Endothelial cell of umbilical vein (primary cell): ENCODE measurements at regions of chr14 and their contacts with region 1.

Region 1: GRCh38 chr14:32252030-32252670 is 49.1 kb upstream of the RNU6-8 start:
- DNase-seq: peak; percentile 69
- H3K4me3 ChIP-seq: no peak overlapping the region
- H3K27ac ChIP-seq: no peak overlapping the region
- H3K4me1 ChIP-seq: no peaks in the 10 kb centered on the region
- H3K27me3 ChIP-seq: no peaks in the 10 kb centered on the region
- CTCF ChIP-seq: peak; percentile 73 to 82
- POLR2A ChIP-seq: no peak

Region 2: DNA sequence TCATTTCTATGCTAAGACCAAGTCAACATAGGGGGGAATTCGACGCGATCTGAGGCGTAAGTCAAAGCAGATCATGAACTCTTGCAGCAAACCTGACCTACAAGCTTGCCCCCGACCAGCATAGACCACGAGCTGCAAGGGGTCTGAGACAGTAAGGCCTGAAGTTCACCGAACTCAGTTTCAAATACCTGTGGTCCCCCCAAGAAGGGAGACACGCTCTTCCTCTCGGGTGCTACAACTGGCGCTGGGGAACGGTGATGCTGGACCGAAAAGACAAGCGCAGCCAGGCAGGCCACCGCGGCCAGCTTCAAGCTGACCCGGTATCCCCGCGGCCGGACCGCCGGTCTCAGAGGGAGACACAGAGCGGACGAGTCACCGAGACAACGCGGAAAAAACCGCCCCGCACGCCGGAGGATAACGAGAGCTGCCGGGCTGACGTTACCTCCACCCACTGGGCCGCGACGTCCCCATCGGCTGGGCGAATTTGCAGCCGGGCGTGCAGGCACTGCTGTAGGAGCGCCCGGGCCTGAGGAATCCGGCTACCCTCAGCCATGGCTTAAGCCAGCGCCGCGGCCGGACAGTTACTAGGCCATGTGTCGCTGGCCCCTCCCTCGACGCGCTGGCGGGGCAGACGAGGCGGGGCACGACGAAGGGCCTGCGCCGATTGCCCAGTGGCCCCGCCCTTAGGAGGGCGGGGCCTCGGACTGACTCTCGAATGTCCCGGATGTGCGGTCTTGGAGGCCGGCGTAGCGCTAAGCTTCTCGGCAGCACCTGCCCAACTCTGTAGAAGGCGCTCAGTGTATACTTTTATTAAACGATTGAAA is 795.1 kb before region 1 on chr14 and contains the start of gene DTD2:
- CTCF ChIA-PET with region 1: interaction called, 7 read pairs
- POLR2A ChIA-PET with region 1: no interaction called
- dilution Hi-C with region 1: no loop called
- intact Hi-C with region 1: loop called (anchors 1 kb)
- DNase-seq: peak; percentile 95
- H3K4me3 ChIP-seq: peak within 1 kb of the TSS; percentile 34 to 64 (median 63)
- H3K27ac ChIP-seq: peak within 1 kb of the TSS; percentile 70
- H3K4me1 ChIP-seq: peaks cover 2% of the 10 kb centered on the region
- H3K27me3 ChIP-seq: no peaks in the 10 kb centered on the region
- CTCF ChIP-seq: no peak
- POLR2A ChIP-seq: peak; percentile 88
- total RNA-seq, gene DTD2: 10.8 and 14.4 TPM in 2 replicates

Region 3: GRCh38 chr14:31926123-31926522 is 326.0 kb before region 1 on chr14:
- CTCF ChIA-PET with region 1: interaction called, 44 read pairs
- POLR2A ChIA-PET with region 1: no interaction called
- dilution Hi-C with region 1: no loop called
- intact Hi-C with region 1: loop called (anchors 1 kb)
- DNase-seq: peak; percentile 60
- H3K4me3 ChIP-seq: no peak overlapping the region
- H3K27ac ChIP-seq: peak overlapping the region; percentile 95
- H3K4me1 ChIP-seq: peaks cover 21% of the 10 kb centered on the region
- H3K27me3 ChIP-seq: no peaks in the 10 kb centered on the region
- CTCF ChIP-seq: peak; percentile 46 to 53
- POLR2A ChIP-seq: no peak

Region 4: GRCh38 chr14:32202998-32203882 is 48.9 kb before region 1 on chr14 and contains the start of gene RNU6-8:
- CTCF ChIA-PET with region 1: interaction called, 4 read pairs
- POLR2A ChIA-PET with region 1: no interaction called
- dilution Hi-C with region 1: no loop called
- intact Hi-C with region 1: loop called (anchors 1 kb)
- DNase-seq: peak; percentile 88
- H3K4me3 ChIP-seq: peak within 1 kb of the TSS; percentile 55 to 92 (median 78)
- H3K27ac ChIP-seq: peak within 1 kb of the TSS; percentile 88
- H3K4me1 ChIP-seq: peaks cover 16% of the 10 kb centered on the region
- H3K27me3 ChIP-seq: peaks cover 6 to 17% of the 10 kb centered on the region in 2 experiments
- CTCF ChIP-seq: no peak
- POLR2A ChIP-seq: peak; percentile 46
- total RNA-seq, gene RNU6-8: not detected in 2 replicates

Region 5: GRCh38 chr14:32509632-32510187 is 257.6 kb after region 1 on chr14:
- CTCF ChIA-PET with region 1: interaction called, 33 read pairs
- POLR2A ChIA-PET with region 1: no interaction called
- dilution Hi-C with region 1: no loop called
- intact Hi-C with region 1: loop called (anchors 5 kb)
- DNase-seq: peak; percentile 98
- H3K4me3 ChIP-seq: no peak overlapping the region
- H3K27ac ChIP-seq: peak overlapping the region; percentile 67
- H3K4me1 ChIP-seq: peaks cover 25% of the 10 kb centered on the region
- H3K27me3 ChIP-seq: no peaks in the 10 kb centered on the region
- CTCF ChIP-seq: no peak
- POLR2A ChIP-seq: peak; percentile 41